A673 (cell line): ENCODE measurements at regions of chr10 and their contacts with region 1.

Region 1: DNA sequence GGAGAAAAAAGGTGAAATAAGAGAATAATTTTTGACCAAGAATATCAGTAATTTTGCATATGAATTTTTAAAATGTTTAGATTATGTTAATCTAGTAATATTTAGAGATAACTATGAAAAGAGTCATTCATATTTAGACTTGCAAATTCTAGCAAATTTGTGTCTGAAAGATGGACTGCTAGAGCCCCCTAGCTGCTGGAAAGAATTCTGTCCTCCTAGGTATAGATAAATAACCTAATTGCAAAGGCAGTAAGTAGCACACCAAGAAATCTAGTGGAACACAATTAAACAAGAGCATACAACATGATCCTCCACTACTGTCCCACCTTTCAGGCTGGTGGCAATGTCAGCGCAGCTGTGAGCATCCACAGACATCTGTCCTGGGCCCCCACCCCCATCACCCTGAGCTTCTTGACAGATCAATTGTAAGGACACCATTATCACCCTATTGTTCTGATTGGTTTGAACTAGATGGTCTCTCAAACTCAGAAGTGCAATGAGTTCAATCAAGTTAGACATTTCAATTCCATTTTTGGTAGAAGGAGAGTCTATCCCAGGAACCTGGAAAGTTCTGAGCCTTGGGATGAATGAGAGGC is 15.0 kb upstream of the GFRA1 start:
- DNase-seq: peak; percentile 63
- H3K4me3 ChIP-seq: no peak overlapping the region
- H3K27ac ChIP-seq: no peak overlapping the region
- H3K4me1 ChIP-seq: no peaks in the 10 kb centered on the region
- H3K27me3 ChIP-seq: peaks cover 58% of the 10 kb centered on the region
- CTCF ChIP-seq: peak; percentile 75

Region 2: DNA sequence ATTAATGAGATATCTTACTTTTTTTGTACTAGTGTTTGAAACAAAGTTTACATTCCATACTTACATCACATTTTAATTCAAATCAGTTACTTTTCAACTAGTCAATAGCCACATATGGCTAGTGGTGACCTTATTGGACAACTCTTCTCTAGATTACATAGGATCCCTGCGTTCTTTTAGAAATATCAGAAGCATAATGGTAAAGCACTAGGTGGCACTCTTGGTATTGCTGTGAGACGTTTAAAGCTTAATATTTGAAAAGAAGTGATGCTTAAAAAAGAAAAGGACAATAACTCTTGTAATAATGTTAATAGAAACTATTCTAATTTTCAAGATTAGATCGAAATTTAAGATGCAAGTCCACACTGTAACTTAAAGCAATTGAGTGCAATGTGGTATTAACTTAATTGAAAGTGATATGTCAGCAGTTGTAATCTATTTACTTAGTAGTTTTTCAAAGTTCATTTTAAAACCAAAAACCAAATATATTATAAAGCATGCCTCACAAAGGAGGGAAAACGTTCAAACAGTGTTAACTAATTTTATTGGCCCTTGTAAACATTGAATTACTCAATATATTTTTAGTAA is 855.7 kb before region 1 on chr10:
- CTCF ChIA-PET with region 1: no interaction called
- POLR2A ChIA-PET with region 1: no interaction called
- intact Hi-C with region 1: loop called (anchors 2 kb)
- DNase-seq: peak; percentile 38
- H3K4me3 ChIP-seq: no peak overlapping the region
- H3K27ac ChIP-seq: no peak overlapping the region
- H3K4me1 ChIP-seq: no peaks in the 10 kb centered on the region
- H3K27me3 ChIP-seq: no peaks in the 10 kb centered on the region
- CTCF ChIP-seq: peak; percentile 56

Region 3: DNA sequence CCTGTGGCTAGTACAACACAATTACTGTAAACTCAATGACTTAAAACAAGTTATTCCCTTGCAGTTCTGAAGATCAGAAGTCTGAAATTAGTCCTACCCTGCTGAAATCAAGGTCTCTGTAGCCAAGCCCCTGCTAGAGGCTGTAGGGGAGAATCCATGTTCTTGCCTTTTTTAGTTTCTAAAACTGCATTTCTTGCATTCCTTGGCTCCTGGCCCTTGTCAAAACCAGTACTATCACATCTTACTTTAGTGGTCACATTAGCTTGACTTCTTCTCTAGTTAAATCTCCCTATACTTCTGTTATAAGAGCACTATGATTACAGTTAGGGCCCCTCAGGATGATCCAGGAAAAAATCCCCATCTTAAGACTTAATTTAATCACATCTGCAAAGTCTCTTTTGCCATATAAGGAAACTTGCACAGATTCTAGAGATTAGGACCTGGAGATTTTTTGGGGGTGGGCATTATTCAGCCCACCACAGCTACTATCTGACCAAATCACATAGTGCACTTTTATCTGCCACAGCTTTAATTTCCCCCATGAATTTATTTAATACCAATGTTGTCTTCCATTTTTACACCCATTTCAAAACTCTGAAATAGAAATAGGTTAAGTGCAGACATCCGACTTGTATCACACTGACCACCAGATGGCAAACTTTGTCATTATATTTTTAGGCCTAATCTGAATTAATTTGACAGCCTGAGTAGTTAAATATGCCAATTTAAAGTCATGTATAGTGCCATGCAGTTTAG is 581.8 kb before region 1 on chr10:
- CTCF ChIA-PET with region 1: interaction called, 4 read pairs
- POLR2A ChIA-PET with region 1: no interaction called
- intact Hi-C with region 1: loop called (anchors 1 kb)
- DNase-seq: peak; percentile 48
- H3K4me3 ChIP-seq: no peak overlapping the region
- H3K27ac ChIP-seq: no peak overlapping the region
- H3K4me1 ChIP-seq: no peaks in the 10 kb centered on the region
- H3K27me3 ChIP-seq: peaks cover 22% of the 10 kb centered on the region
- CTCF ChIP-seq: peak; percentile 70

Region 4: GRCh38 chr10:115762029-115762428 is 526.0 kb before region 1 on chr10:
- CTCF ChIA-PET with region 1: no interaction called
- POLR2A ChIA-PET with region 1: no interaction called
- intact Hi-C with region 1: no loop called
- DNase-seq: no peak
- H3K4me3 ChIP-seq: no peak overlapping the region
- H3K27ac ChIP-seq: no peak overlapping the region
- H3K4me1 ChIP-seq: no peaks in the 10 kb centered on the region
- H3K27me3 ChIP-seq: peaks cover 15% of the 10 kb centered on the region
- CTCF ChIP-seq: no peak

Region 5: DNA sequence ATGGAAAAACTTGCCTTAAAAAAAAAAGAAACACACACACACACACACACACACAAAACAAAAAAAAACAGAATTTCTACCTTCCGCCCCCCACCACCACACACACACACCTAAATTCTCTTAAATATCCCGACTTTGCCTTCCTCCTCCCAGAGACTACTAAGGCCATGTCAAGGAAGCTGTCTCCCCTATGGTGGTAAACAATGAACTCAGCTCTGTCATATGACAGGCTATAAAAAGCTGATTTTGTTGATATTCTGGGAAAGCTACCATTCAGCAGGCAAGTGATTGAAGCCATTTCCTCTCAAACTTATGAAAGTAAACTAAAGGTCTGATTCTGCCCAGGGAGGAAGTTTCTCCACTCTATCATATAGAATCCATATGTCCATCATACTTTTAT is 486.0 kb before region 1 on chr10:
- CTCF ChIA-PET with region 1: no interaction called
- POLR2A ChIA-PET with region 1: no interaction called
- intact Hi-C with region 1: loop called (anchors 1 kb)
- DNase-seq: no peak
- H3K4me3 ChIP-seq: no peak overlapping the region
- H3K27ac ChIP-seq: no peak overlapping the region
- H3K4me1 ChIP-seq: no peaks in the 10 kb centered on the region
- H3K27me3 ChIP-seq: peaks cover 32% of the 10 kb centered on the region
- CTCF ChIP-seq: no peak

Region 6: DNA sequence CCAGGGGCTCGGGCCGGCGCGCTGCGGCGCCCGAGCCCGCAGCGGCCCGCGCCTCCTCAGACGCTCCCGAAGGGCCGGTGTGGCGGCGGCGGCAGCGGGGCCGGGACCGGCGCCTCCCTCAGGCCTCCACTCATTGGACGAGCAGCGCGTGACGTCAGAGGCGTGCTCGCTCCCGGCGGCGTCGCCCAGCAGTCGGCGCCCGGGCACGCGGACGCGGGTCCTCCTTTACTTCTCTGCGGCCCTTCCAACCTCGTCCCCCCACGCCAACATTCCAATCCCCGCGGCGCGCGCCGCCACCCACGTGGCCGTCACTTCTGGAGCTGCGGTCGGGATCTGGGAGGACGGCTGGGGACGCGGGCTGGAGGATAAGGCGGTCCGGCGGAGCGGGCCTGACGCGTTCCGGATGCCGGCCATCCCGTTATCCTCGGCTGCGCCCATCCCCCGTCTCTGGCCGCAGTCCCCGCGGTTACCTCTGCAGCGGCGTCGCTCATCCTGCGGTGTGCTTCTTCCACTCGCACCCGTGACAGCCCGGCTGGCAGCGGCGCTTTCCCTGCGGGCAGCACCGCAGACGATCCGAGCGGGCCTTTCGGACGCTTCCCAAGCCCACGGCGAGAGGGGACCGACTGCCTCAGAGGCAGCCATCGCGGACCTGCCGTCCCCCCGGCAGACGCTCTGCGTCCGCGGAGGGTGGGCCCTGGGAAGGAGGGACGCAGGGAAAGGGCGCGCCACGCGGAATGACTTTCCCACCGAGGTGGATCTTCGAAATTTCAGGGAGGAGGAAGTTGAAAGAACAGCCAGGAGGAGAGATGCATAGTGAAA is 1087.6 kb after region 1 on chr10 and contains the start of gene PDZD8:
- CTCF ChIA-PET with region 1: no interaction called
- POLR2A ChIA-PET with region 1: no interaction called
- intact Hi-C with region 1: no loop called
- DNase-seq: peak; percentile 95
- H3K4me3 ChIP-seq: peak within 1 kb of the TSS; percentile 92
- H3K27ac ChIP-seq: peak within 1 kb of the TSS; percentile 78
- H3K4me1 ChIP-seq: peaks cover 4% of the 10 kb centered on the region
- H3K27me3 ChIP-seq: peaks cover 38% of the 10 kb centered on the region
- CTCF ChIP-seq: no peak
- total RNA-seq, gene PDZD8: 28.7 and 29.5 TPM in 2 replicates